ENCODE measurements at regions of chr3 and their contacts with region 1.

Region 1: GRCh38 chr3:68876112-68876713 is 56.1 kb downstream of the TAFA4 start:
- DNase-seq: peak in 2 of 4 donors; percentile 54 to 71
- ATAC-seq: peak; percentile 90
- H3K4me3 ChIP-seq: no peak overlapping the region
- H3K27ac ChIP-seq: no peak overlapping the region
- H3K4me1 ChIP-seq: no peaks in the 10 kb centered on the region
- H3K27me3 ChIP-seq: no peaks in the 10 kb centered on the region
- CTCF ChIP-seq: peak; percentile 76 to 79

Region 2: GRCh38 chr3:67113802-67114407 is 1762.3 kb before region 1 on chr3:
- intact Hi-C with region 1: loop called in 1 of 2 experiments (anchors 10 kb)
- DNase-seq: peak; percentile 35 to 88 (median 68)
- ATAC-seq: peak; percentile 99
- H3K4me3 ChIP-seq: no peak overlapping the region
- H3K27ac ChIP-seq: no peak overlapping the region
- H3K4me1 ChIP-seq: no peaks in the 10 kb centered on the region
- H3K27me3 ChIP-seq: peaks cover 0 to 4% of the 10 kb centered on the region in 2 donors
- CTCF ChIP-seq: peak; percentile 77 to 82

Region 3: GRCh38 chr3:68817243-68817642 is 59.0 kb before region 1 on chr3:
- intact Hi-C with region 1: no loop called
- DNase-seq: no peak
- ATAC-seq: no peak
- H3K4me3 ChIP-seq: no peak overlapping the region
- H3K27ac ChIP-seq: no peak overlapping the region
- H3K4me1 ChIP-seq: no peaks in the 10 kb centered on the region
- H3K27me3 ChIP-seq: no peaks in the 10 kb centered on the region
- CTCF ChIP-seq: no peak